Activated naive CD4-positive, alpha-beta T cell treated with anti-CD3 and anti-CD28 coated beads for 36 hours (primary cell): ENCODE measurements at regions of chr1 and their contacts with region 1.

Region 1: DNA sequence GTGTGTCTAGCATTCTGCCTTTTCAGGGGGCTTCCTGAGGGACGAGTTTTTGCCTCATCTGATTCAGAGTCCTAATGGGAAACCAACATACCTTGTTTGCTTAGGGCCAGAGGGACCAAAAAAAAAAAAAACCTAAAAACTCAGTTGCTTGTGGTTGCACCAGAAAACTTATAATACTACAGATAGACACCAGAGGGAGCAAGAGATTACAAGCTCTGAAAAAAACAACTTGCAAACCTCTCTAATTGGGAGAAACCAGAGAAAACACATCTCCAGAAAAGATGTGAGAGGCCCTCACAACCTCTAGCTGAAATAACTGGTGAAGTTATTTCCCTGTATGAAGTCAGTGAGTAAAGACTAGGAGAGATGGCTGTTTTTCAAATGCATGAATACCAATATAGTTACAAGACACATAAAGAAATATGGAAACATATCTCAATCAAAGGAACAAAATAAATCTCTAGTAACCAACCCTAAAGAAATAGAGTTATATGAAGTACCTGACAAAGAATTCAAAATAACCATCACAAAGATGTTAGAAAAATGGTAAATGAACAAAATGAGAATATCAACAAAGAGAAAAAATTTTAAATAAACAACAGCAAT is 233.7 kb upstream of the NFIA start:
- DNase-seq: no peak
- H3K4me3 Mint-ChIP-seq: no peak overlapping the region
- H3K27ac Mint-ChIP-seq: no peak overlapping the region
- H3K4me1 Mint-ChIP-seq: no peaks in the 10 kb centered on the region
- H3K27me3 Mint-ChIP-seq: peaks cover 10% of the 10 kb centered on the region

Region 2: GRCh38 chr1:60657926-60658325 is 190.8 kb before region 1 on chr1:
- CTCF ChIA-PET with region 1: no interaction called
- intact Hi-C with region 1: no loop called
- DNase-seq: no peak
- H3K4me3 Mint-ChIP-seq: no peak overlapping the region
- H3K27ac Mint-ChIP-seq: no peak overlapping the region
- H3K4me1 Mint-ChIP-seq: no peaks in the 10 kb centered on the region
- H3K27me3 Mint-ChIP-seq: no peaks in the 10 kb centered on the region

Region 3: GRCh38 chr1:61184040-61184713 is 335.5 kb after region 1 on chr1:
- CTCF ChIA-PET with region 1: no interaction called
- intact Hi-C with region 1: no loop called
- DNase-seq: no peak
- H3K4me3 Mint-ChIP-seq: no peak overlapping the region
- H3K27ac Mint-ChIP-seq: no peak overlapping the region
- H3K4me1 Mint-ChIP-seq: no peaks in the 10 kb centered on the region
- H3K27me3 Mint-ChIP-seq: no peaks in the 10 kb centered on the region

Region 4: DNA sequence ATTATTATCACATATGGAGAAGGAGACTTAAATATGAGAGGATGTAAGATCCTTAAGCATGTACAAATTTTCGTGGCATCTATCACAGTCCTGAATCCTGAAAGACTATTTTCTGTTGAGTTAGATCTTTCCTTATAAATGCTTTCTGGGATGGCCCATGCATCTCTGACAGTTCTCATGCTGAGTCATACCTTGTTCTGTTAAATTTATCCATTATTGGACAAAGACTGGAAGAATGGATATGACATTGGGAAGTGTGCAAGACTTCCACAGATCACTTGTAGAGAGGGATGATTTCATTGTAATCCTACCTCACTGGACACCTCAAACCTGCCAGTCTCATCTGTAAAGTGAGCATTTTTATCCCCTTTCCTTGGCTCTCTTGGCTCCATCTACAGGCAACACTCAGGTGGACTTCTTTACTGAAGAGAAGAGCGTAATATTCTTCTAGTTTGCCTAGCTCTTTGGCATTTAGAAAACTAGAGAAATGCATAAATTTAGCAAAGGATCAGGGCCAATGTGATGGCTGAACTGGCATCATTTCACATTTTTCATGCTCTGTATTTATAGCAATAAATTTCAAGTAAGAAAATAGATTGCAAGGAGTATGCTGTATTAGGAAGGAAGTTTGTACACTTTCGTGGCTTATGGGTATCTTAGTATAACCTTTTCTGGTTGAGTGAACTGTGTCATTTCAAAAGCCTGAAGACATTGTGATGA is 361.9 kb after region 1 on chr1:
- CTCF ChIA-PET with region 1: no interaction called
- intact Hi-C with region 1: loop called (anchors 10 kb)
- DNase-seq: no peak
- H3K4me3 Mint-ChIP-seq: no peak overlapping the region
- H3K27ac Mint-ChIP-seq: no peak overlapping the region
- H3K4me1 Mint-ChIP-seq: no peaks in the 10 kb centered on the region
- H3K27me3 Mint-ChIP-seq: no peaks in the 10 kb centered on the region